HEK293T (cell line): ENCODE measurements at regions of chr2 and their contacts with region 1.

Region 1: GRCh38 chr2:74458132-74458925 is at the start of gene WBP1:
- DNase-seq: peak; percentile 93

Region 2: GRCh38 chr2:74421221-74421870 is 37.0 kb before region 1 on chr2 and contains the starts of genes C2orf81 and WDR54:
- CTCF ChIA-PET with region 1: no interaction called
- POLR2A ChIA-PET with region 1: interaction called, 18 read pairs
- DNase-seq: peak; percentile 97

Region 3: DNA sequence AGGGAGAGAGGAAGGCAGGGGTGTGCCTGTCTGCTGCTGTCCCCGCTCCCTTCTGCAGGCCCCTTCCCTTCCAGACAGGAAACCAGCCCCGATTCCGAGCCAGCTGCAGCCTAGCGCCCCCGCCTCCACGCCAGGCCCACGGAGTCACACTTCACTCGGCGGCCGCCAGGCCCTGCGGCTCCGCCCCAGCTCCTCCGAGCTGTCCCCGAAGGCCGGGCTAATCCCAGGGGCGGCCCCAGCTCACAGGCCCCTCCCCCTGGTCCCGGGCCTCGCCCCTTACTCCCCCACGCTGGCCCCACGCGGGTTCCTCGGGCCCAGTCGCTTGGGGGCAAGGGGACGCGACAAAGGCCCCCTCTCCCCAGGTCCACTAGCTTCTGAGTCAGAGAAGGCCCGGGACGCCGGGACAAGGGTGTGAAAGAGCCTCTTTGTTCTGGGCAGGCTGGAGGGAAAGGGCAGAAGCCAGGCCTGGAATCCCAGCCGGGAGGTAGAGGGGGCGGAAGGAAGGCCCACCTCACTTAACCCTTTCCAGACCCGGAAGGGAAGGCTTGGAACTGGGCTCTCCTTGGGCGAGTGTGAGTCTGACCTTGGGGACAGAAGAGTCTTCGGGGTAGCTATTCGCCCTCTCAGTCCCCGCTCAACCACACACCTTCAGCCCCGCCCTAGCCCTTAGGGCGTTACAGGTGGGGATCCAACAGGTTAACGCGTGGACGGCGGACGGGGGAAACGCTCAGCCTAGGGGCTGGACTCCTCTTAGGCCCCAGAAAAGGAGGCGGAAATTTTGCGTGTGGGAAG is 17.8 kb before region 1 on chr2:
- CTCF ChIA-PET with region 1: no interaction called
- POLR2A ChIA-PET with region 1: interaction called, 81 read pairs
- DNase-seq: peak; percentile 94

Region 4: DNA sequence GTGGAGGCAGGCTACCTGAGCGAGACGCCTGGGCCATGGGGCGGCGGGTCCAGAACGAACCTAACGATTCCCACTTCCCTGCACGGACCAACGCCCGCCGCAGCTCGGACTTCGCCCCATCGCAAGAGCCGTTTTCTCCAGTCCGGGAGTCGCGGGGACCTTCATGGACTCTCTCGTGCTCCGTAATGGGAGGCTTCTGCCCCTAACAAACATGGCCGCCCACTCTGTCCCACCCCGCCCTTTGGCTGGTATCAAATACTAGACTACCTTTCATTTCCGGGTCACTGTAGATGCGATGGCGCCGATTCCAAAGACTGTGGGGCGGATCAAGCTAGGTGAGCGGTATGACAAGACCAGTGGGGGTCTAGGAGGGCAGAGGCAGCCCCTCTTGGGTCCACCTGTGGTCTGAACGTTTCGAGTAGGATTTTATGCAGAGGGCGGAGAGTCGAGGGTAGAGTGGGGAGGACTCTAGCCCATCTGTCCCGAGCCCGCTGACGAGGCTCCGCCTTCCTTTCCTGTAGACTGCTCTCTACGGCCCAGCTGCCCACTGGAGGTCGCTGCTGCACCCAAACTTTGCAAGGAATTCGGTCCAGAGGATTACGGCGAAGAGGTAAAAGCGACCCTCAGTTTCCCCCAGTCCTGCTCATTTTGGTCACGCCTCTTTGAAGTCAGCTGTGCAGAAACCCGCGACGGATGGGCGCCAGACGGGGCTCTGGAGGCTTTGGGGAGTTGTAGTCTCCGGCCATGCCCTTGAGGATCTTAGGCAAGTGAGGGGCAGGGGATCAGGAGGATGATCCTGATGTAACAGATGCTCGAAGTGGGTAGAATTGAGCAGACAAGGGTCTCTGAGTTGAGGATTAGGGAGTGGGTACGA is 24.7 kb after region 1 on chr2 and contains the starts of genes CCDC142 and TTC31:
- CTCF ChIA-PET with region 1: interaction called, 3 read pairs
- POLR2A ChIA-PET with region 1: interaction called, 20 read pairs
- DNase-seq: peak; percentile 88

Region 5: DNA sequence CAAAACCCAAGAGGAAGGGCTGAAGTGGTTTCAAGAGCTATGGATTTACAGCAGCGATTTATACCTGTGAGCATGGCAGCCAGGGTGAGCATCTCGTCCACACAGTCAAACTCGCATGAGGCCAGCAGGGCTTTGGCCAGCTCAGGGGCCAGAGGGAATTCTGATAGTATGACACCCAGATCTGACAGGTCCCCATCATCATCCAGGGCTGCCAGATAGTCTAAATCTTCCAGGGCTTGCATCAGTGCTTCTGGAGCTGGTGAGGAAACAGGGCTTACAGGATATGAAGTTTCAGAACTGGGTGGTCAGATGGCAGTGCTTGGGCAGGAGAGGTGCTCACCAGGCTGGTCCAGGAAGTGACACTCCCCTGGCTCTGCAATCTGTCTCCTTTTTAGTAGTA is 64.2 kb after region 1 on chr2:
- CTCF ChIA-PET with region 1: no interaction called
- POLR2A ChIA-PET with region 1: no interaction called
- DNase-seq: no peak